Right ventricle myocardium inferior (tissue), 1 donor: ENCODE measurements at regions of chr6 and their contacts with region 1.

Region 1: DNA sequence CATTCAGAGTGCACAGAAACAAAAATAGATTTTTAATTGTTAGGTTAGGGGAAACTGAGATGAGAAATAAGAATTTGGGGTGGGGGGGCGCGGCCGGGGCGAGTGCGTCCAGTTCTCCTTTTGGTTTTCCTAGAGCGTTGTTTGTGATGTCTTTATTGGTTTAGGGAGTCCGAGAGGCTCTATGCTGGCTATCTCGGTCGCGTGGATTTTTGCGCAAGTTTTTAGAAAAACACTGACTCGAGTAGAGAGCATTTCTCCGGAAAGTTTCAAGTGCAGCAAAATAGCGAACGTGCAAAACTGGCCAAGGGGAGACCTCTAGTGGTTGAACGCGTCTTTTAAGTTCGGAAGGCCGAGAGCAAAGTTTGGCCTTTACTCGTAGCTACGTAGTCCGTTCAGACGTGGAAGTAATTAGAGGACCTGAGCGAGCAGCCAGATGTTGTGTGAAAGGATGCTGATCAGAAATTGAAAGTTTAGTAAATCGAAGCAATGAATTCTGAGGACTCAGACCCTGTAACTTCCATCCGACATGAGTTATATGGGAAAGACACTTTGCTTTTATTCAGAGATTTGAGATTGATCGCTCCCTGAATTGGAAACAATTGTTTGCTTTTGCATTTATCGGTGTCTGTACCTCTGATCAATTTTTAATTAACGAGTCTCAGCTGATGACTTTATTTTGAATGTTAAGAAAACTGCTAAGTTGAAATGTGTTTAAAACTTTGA is 2.7 kb downstream of the L3MBTL3 start:
- DNase-seq: peak; percentile 75
- ATAC-seq: peak; percentile 87

Region 2: GRCh38 chr6:129498950-129499842 is 521.9 kb before region 1 on chr6:
- intact Hi-C with region 1: loop called (anchors 10 kb)
- DNase-seq: no peak
- ATAC-seq: peak; percentile 35

Region 3: GRCh38 chr6:129598244-129599187 is 422.6 kb before region 1 on chr6:
- intact Hi-C with region 1: loop called (anchors 2 kb)
- DNase-seq: no peak
- ATAC-seq: peak; percentile 72

Region 4: GRCh38 chr6:129774697-129775447 is 246.2 kb before region 1 on chr6:
- intact Hi-C with region 1: loop called (anchors 10 kb)
- DNase-seq: no peak
- ATAC-seq: peak; percentile 69

Region 5: DNA sequence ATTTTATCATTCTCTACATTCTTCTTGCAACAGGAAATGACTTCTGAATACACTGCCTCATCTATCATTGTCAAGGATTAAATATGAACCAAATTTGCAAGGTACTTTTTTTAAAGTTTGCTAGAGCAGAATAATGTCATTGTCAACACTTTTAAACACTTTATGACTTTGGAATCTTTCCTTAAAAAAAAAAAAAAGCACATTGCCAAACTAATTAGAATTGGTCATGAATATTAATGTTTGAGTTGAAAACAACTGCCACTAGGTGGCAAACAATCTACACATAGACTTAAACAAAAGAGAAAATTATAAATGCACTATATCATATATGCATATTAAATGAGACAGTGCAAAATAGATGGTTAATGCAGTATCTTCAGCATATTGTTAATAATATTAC is 127.4 kb before region 1 on chr6:
- intact Hi-C with region 1: loop called (anchors 1 kb)
- DNase-seq: no peak
- ATAC-seq: no peak

Region 6: DNA sequence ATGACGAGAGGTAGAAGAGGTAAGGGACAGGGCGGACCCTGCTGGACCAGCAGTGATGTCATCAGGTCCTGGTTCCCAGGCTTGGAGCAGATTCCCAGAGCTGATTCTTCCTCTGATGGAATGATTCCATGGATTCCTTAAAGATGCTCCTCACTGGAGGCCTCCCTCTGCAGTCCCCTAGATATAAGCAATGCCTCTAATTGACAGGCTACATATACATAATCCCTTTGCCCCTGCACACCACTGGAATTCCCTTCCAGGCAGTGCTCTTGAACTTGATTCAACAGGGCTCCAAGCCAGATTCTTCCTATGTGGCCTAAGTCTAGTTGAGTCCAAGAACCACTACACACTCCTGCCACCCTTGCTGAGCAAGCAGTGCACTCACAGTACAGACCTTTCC is 54.9 kb before region 1 on chr6:
- intact Hi-C with region 1: no loop called
- DNase-seq: no peak
- ATAC-seq: no peak

Region 7: GRCh38 chr6:130148181-130148580 is 127.1 kb after region 1 on chr6:
- intact Hi-C with region 1: no loop called
- DNase-seq: no peak
- ATAC-seq: no peak